Transverse colon (tissue), 4 donors: ENCODE measurements at regions of chr16 and their contacts with region 1.

Region 1: GRCh38 chr16:11742539-11743307 is at the start of gene TXNDC11:
- DNase-seq: peak; percentile 100
- H3K4me3 ChIP-seq: peak within 1 kb of the TSS; percentile 80 to 86 (median 82)
- H3K27ac ChIP-seq: peak within 1 kb of the TSS; percentile 98 to 100 (median 98)
- H3K4me1 ChIP-seq: peaks cover 11 to 64% (median 49%) of the 10 kb centered on the region in 4 donors
- H3K27me3 ChIP-seq: no peaks in the 10 kb centered on the region
- CTCF ChIP-seq: no peak
- EP300 ChIP-seq: peak; percentile 82
- POLR2A ChIP-seq: peak; percentile 93
- total RNA-seq, gene TXNDC11: 66.8 to 105 (median 71.1) TPM

Region 2: GRCh38 chr16:11797166-11797956 is 54.6 kb after region 1 on chr16 and contains the start of gene ZC3H7A:
- in situ Hi-C with region 1: no loop called
- intact Hi-C with region 1: loop called (anchors 2 kb)
- DNase-seq: peak; percentile 97
- H3K4me3 ChIP-seq: peak within 1 kb of the TSS; percentile 79 to 95 (median 90)
- H3K27ac ChIP-seq: peak within 1 kb of the TSS; percentile 95 to 100 (median 97)
- H3K4me1 ChIP-seq: peaks cover 32 to 66% (median 49%) of the 10 kb centered on the region in 4 donors
- H3K27me3 ChIP-seq: no peaks in the 10 kb centered on the region
- CTCF ChIP-seq: peak; percentile 33 to 84 (median 66)
- EP300 ChIP-seq: no peak
- POLR2A ChIP-seq: peak; percentile 98
- total RNA-seq, gene ZC3H7A: 38.1 to 92.0 (median 63.3) TPM